AG04450 (cell line): ENCODE measurements at regions of chr11 and their contacts with region 1.

Region 1: DNA sequence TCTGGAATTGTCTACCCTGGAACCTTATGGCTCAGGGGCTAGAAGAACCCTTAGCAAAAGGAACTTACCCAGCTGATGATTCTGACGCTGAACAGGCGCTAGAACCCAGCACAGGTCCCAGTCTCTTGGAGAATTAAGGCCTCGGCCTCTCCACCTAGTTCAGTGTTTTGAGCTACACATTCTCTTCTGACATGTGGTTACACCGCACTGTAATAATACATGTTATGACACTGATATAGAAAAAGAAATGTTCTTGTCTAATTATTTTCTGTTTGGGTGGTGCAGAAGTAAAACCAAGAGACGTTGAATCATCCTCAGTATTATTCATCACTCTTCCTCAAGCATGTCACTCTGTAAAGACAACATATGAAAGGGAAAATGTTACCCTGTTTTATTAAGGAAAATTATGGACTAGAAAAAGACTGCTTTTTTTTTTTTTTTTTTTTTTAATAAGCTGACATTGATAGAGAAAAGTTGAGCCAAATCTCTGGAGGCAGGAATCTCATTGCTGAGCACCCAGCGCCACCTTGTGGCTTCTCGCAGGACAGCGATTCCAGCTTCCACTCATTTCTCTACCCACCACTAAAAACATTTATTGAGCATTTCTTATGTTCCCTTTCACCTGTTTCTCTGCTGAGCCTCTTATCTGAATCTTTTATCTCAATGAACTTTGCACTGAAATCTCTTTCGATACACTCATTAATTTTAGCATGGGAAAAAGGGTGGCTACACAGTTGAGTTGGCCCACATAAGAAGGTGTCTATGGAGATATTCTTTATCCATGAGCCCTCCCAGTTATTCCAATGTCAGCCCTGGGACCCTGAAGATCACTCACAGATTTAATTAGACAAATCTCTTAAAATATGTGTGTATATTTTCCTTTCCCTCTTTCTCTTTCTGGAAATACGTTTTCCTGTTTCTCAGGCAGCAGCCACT is 12.6 kb upstream of the APLNR start:
- DNase-seq: peak; percentile 39
- H3K4me3 ChIP-seq: no peak overlapping the region
- H3K27ac ChIP-seq: no peak overlapping the region
- H3K27me3 ChIP-seq: no peaks in the 10 kb centered on the region
- CTCF ChIP-seq: peak; percentile 96

Region 2: DNA sequence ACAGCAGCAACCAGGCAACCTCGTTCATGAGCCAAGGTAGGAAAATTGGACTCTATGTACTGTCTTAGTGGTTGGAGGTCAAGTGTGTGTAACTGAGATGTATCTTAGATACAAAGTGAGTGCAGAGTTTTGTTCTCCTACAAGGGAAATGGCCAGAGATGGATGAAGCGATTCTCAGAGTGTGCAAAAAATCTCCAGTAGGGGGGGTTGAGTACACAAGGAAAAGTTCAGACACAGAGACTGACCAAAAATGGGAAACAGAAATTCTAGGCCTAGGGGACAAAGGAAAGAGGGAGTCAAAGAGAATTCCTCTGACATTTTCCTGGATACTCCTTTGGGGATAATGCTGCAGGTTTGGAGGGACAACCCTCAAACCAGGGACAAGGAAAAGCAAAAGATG is 299.1 kb before region 1 on chr11:
- CTCF ChIA-PET with region 1: interaction called, 11 read pairs
- POLR2A ChIA-PET with region 1: no interaction called
- DNase-seq: no peak
- H3K4me3 ChIP-seq: no peak overlapping the region
- H3K27ac ChIP-seq: no peak overlapping the region
- H3K27me3 ChIP-seq: no peaks in the 10 kb centered on the region
- CTCF ChIP-seq: no peak

Region 3: DNA sequence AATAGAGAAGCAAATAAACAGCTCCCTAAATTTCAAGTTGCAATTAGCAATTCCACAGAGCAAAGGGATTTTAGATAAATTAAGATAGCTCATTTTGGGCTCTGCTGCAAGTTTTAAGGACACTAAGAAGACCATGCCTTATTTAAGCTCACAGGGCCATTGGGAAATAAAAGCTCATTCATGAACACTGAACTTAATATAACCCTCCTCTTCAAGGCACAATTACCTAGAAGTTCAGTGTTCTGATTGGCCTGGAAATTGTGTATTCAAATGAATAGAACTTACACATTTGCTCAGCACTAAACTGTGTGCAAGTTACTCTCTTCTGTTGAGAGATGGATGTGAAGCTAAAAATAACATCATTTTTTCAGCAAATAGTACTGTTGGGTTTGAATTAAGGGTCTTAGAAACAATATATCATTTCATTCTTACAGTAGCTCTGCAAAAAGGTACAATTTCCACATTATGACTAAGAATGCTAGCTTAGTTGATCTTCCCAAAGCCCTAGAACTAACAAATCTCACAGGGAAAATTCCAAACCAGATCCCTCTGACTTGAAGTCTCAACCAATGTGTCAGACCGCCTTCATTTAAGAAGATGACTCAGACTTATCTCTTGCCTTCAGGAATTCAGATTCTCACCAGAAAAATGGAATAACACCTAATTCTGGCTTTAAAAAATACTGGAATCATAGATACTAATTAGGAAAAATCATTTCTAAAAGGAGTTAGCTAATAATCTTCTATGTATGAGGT is 155.3 kb before region 1 on chr11:
- CTCF ChIA-PET with region 1: interaction called, 24 read pairs
- POLR2A ChIA-PET with region 1: no interaction called
- DNase-seq: no peak
- H3K4me3 ChIP-seq: no peak overlapping the region
- H3K27ac ChIP-seq: no peak overlapping the region
- H3K27me3 ChIP-seq: no peaks in the 10 kb centered on the region
- CTCF ChIP-seq: no peak

Region 4: GRCh38 chr11:57155838-57156607 is 93.6 kb before region 1 on chr11:
- CTCF ChIA-PET with region 1: interaction called, 18 read pairs
- POLR2A ChIA-PET with region 1: no interaction called
- DNase-seq: no peak
- H3K4me3 ChIP-seq: no peak overlapping the region
- H3K27ac ChIP-seq: no peak overlapping the region
- H3K27me3 ChIP-seq: peaks cover 2% of the 10 kb centered on the region
- CTCF ChIP-seq: no peak

Region 5: DNA sequence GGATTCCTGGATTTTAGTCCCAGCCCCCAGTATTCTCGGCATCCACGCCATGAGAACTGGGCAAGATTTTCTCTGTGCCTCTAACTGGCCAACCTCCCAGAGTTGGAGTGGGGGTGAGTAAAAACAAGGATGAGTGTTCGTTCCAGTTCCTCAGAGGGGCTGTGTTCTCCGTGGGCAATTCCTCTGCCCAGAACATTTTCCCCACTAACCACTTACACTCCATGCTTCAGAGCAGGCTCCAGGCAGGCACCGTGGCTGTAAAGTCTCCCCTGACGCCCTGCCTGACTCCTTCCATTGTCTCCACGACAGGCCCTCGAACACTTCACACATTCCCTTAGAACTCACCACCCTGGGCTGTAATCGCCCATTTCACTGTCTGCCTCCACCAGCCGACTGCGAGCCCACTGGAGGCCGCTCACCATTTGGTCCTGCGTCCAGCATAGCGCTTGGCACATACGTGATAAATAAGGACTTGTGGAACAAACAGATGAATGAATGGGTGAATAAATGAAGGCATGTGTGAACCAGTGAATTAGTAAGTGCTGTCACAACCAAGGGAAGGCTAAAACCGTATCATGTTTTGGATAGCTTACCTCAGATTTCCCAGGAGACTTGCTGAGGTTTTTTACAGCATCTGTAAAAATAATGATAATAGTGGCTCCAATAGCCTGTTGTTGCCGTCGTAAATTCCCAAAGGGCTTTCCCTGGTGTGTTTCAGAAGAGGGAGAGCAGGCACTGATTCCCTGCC is 18.7 kb before region 1 on chr11:
- CTCF ChIA-PET with region 1: interaction called, 69 read pairs
- POLR2A ChIA-PET with region 1: no interaction called
- DNase-seq: no peak
- H3K4me3 ChIP-seq: no peak overlapping the region
- H3K27ac ChIP-seq: no peak overlapping the region
- H3K27me3 ChIP-seq: peaks cover 46% of the 10 kb centered on the region
- CTCF ChIP-seq: no peak

Region 6: GRCh38 chr11:57294605-57295131 is 45.0 kb after region 1 on chr11:
- CTCF ChIA-PET with region 1: interaction called, 11 read pairs
- POLR2A ChIA-PET with region 1: no interaction called
- DNase-seq: no peak
- H3K4me3 ChIP-seq: no peak overlapping the region
- H3K27ac ChIP-seq: peak overlapping the region; percentile 25
- H3K27me3 ChIP-seq: no peaks in the 10 kb centered on the region
- CTCF ChIP-seq: no peak